Caco-2 (cell line): ENCODE measurements at regions of chr6 and their contacts with region 1.

Region 1: GRCh38 chr6:129661536-129662405 is 48.2 kb downstream of the ARHGAP18 start:
- DNase-seq: no peak
- H3K4me3 ChIP-seq: no peak overlapping the region
- H3K4me3 Mint-ChIP-seq: peak overlapping the region; percentile 35
- H3K27ac Mint-ChIP-seq: peak overlapping the region; percentile 77
- H3K4me1 ChIP-seq: peaks cover 39% of the 10 kb centered on the region
- H3K4me1 Mint-ChIP-seq: peaks cover 36% of the 10 kb centered on the region
- H3K27me3 ChIP-seq: no peaks in the 10 kb centered on the region
- H3K27me3 Mint-ChIP-seq: no peaks in the 10 kb centered on the region
- CTCF ChIP-seq: no peak

Region 2: DNA sequence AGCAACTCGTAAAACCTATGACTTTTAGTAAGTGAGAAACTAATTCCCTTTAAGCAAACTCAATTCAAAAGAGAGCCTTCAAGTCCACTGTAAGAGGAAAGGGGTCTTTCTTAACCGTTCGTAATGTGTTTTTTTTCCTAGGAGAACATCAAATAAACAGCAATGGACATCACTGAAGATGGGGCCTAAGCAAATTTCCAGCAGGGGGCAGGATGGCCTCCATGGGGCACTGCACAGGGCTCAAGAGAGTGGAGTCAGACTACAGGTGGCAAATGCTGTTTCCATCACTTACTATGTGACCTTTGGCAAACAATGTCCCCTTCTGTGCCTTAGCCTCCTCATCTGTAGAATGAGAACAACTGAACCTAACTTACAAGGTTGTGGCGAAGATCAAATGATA is 40.5 kb before region 1 on chr6:
- CTCF ChIA-PET with region 1: no interaction called
- POLR2A ChIA-PET with region 1: no interaction called
- intact Hi-C with region 1: no loop called
- DNase-seq: peak in 1 of 2 experiments; percentile 34
- H3K4me3 ChIP-seq: no peak overlapping the region
- H3K4me3 Mint-ChIP-seq: no peak overlapping the region
- H3K27ac Mint-ChIP-seq: no peak overlapping the region
- H3K4me1 ChIP-seq: no peaks in the 10 kb centered on the region
- H3K4me1 Mint-ChIP-seq: no peaks in the 10 kb centered on the region
- H3K27me3 ChIP-seq: no peaks in the 10 kb centered on the region
- H3K27me3 Mint-ChIP-seq: no peaks in the 10 kb centered on the region
- CTCF ChIP-seq: peak in 1 of 2 experiments; percentile 28

Region 3: DNA sequence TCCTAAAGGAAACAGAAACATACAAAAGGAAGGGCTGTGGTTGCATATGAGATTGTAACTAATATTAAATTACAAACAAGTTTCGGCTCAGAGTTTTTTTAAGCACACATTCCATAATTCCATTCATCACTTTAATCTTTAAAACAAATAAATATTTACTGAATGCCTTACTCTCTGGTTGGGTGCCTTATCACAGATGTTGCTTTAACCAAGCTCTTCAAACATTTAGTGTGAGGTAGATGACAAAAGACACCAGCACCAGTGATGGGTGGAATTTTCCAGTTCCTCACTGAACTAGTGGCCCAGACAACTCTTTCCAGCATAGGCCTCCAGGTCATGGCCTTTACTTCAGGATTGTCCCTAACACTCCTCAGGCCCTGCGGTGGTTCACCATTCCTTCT is 10.5 kb before region 1 on chr6:
- CTCF ChIA-PET with region 1: no interaction called
- POLR2A ChIA-PET with region 1: no interaction called
- intact Hi-C with region 1: loop called (anchors 1 kb)
- DNase-seq: peak; percentile 52 to 59
- H3K4me3 ChIP-seq: no peak overlapping the region
- H3K4me3 Mint-ChIP-seq: no peak overlapping the region
- H3K27ac Mint-ChIP-seq: peak overlapping the region; percentile 73
- H3K4me1 ChIP-seq: peaks cover 24% of the 10 kb centered on the region
- H3K4me1 Mint-ChIP-seq: peaks cover 38% of the 10 kb centered on the region
- H3K27me3 ChIP-seq: no peaks in the 10 kb centered on the region
- H3K27me3 Mint-ChIP-seq: no peaks in the 10 kb centered on the region
- CTCF ChIP-seq: no peak

Region 4: DNA sequence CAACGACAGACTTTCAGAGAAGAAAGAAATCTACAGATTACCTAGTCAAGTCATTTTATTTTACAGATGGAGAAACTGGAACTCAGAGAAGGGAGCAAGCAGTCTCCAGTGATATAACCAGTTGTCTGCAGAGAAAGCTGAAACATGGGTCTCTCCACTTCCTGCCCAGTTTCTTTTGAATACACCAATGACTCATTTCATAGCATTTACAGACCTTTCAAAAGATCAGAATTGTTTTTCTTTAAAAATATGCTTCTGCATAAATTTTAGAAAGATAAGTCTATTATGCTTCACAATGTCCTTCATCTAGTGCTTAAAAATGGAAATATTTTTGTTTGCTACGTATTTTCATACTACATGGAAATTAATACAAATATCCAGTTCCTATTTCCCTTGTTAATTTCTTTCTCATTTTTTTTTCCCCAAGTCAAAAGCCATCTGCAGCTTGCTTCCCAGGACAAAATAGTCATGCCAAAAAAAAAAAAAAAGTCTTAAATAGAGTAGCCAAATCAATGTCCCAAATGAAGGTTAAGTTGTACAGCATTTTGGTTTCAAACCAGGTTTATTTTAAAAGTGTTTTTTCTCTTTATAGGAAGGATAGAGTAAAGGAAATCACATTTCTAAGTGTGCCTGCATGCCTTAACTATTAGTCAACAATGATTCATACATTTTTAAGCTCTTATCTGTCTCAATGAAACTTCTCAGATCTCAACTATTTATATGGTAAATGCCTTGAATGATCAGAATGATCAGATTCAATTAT is 11.3 kb after region 1 on chr6:
- CTCF ChIA-PET with region 1: no interaction called
- POLR2A ChIA-PET with region 1: no interaction called
- intact Hi-C with region 1: no loop called
- DNase-seq: no peak
- H3K4me3 ChIP-seq: no peak overlapping the region
- H3K4me3 Mint-ChIP-seq: no peak overlapping the region
- H3K27ac Mint-ChIP-seq: peak overlapping the region; percentile 73
- H3K4me1 ChIP-seq: peaks cover 39% of the 10 kb centered on the region
- H3K4me1 Mint-ChIP-seq: peaks cover 45% of the 10 kb centered on the region
- H3K27me3 ChIP-seq: no peaks in the 10 kb centered on the region
- H3K27me3 Mint-ChIP-seq: no peaks in the 10 kb centered on the region
- CTCF ChIP-seq: no peak

Region 5: DNA sequence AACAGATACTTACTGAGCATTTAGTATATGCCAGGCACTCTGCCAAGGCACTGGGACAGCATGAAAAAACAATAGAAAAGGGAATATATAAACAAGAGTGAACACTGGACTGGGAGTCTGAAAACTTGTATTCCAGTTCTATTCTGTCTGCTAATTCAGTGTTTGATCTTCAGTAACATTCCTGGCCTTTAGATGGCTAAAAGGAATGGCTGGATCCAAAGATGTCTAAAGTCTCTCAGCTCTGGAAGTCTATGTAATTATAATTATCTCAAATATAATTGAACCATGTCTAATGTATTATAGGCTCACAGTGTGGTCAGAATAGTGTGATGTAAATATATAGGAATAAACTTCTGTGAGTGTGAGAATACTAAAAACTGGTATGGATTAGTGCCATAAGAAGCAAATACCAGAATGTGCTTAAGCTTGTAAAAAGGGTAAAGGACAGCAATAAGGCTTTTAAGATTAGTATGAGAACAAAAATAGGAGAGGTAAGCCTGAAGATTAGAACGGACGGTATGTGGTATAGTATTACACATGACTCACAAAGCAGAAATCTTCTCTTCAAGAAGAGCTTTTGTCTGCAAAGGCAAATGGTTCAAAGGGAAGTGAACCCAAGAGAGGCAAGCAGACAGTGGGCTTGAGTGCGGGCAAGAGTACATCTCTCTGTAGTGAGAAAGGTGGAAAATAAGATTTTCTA is 772.6 kb after region 1 on chr6:
- CTCF ChIA-PET with region 1: no interaction called
- POLR2A ChIA-PET with region 1: no interaction called
- intact Hi-C with region 1: no loop called
- DNase-seq: no peak
- H3K4me3 ChIP-seq: no peak overlapping the region
- H3K4me3 Mint-ChIP-seq: no peak overlapping the region
- H3K27ac Mint-ChIP-seq: peak overlapping the region; percentile 21
- H3K4me1 ChIP-seq: peaks cover 10% of the 10 kb centered on the region
- H3K4me1 Mint-ChIP-seq: peaks cover 6% of the 10 kb centered on the region
- H3K27me3 ChIP-seq: no peaks in the 10 kb centered on the region
- H3K27me3 Mint-ChIP-seq: no peaks in the 10 kb centered on the region
- CTCF ChIP-seq: no peak